Activated CD8-positive, alpha-beta T cell treated with anti-CD3 and anti-CD28 coated beads, Interleukin-2, amount 10 ng/mL, durations not matched to agents 7 days and 5 days (primary cell): ENCODE measurements at regions of chr10 and their contacts with region 1.

Region 1: DNA sequence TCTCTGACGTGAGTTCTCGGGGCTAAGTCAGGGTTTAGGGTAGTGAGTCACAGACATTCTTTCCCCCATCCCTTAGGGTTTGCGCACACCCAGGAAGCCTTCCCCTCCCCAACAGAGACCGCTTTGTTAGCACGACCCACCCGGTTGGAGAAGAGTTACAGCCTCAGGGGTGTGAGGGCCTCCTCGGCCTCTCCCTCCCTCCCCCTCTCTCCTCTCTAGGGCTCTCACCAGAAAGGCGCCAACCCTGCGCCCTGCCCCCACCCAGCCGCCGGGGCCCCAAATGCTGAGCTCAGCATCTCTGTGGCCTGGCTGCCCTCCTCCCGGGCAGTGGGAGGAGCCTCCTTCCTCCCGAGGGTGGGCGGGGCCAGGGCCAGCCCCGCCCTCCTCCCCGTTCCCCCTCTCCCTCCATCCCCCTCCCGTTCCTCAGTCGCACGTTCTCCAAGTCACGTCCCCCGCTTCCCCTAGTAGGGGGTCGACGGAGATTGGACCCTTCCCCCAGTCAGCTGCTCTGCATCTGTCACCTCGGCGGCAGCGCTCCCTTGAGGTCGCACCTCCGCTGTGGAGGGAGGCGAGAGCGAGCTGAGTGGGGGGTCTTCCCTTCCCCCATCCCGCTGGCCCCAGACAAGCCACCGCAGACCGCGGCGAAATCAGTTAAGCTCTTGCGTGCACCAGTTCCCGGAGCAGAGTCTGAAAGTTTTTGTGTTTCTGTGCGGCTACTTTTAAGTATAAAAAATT is 13.0 kb upstream of the DDIT4 start:
- DNase-seq: peak; percentile 97
- ATAC-seq: peak; percentile 74
- H3K4me3 Mint-ChIP-seq: peak overlapping the region; percentile 82
- H3K27ac Mint-ChIP-seq: peak overlapping the region; percentile 98
- H3K4me1 Mint-ChIP-seq: peaks cover 65% of the 10 kb centered on the region
- H3K27me3 Mint-ChIP-seq: no peaks in the 10 kb centered on the region

Region 2: DNA sequence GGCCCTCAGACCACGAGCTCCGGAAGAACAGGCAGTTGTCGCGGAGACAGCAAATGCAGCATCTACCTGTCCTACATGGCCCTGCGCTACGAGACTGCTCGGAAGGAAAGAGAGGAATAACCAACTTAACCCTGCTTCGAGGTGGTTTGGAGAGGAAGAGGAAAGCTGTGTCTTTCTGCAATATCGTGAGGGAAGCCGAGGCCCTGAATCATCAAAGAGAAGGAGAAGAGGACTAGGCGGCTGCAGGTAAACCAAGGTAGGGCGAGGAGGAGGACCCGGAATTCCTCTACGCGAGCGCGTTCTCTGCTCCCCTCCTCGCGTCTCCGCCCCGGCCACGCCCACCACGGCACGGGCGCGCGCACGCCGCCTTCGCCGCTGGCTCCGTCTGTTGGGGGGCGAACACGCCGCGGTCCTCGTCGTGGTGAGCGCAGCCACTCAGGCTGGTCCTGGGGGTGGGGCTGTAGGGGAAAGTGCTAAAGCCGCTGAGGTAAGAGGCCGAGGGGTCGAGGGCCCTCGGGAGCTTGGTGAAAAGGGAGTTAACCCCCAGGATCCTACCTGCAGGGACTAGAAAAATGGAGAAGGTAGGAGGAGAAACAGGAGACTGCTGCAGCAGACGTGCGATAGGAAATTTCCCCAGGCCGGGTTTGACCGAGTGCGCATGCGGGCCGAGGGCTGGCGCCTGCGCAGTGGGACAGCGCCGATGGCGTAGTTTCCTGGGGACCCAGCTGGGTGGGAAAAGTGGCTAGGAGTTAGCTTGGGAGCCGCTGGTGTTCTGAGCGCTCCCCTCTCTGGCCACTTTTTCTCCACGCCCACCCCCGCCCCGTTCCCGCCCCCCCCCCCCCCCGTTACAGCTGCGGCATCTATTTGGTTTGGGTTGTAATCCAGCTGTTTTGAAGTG is 44.9 kb before region 1 on chr10 and contains the starts of genes ANAPC16 and ASCC1:
- CTCF ChIA-PET with region 1: interaction called, 3 read pairs
- POLR2A ChIA-PET with region 1: interaction called, 15 read pairs
- DNase-seq: peak; percentile 95
- ATAC-seq: peak; percentile 88
- H3K4me3 Mint-ChIP-seq: peak within 1 kb of the TSS; percentile 96
- H3K27ac Mint-ChIP-seq: peak within 1 kb of the TSS; percentile 96
- H3K4me1 Mint-ChIP-seq: peaks cover 52% of the 10 kb centered on the region
- H3K27me3 Mint-ChIP-seq: no peaks in the 10 kb centered on the region
- total RNA-seq, gene ANAPC16: 72.9 TPM
- total RNA-seq, gene ASCC1: 34.8 to 40.3 TPM

Region 3: GRCh38 chr10:72223743-72224101 is 37.0 kb before region 1 on chr10:
- CTCF ChIA-PET with region 1: interaction called, 14 read pairs
- POLR2A ChIA-PET with region 1: interaction called, 4 read pairs
- DNase-seq: no peak
- ATAC-seq: peak; percentile 22
- H3K4me3 Mint-ChIP-seq: peak overlapping the region; percentile 24
- H3K27ac Mint-ChIP-seq: peak overlapping the region; percentile 65
- H3K4me1 Mint-ChIP-seq: peaks cover 51% of the 10 kb centered on the region
- H3K27me3 Mint-ChIP-seq: no peaks in the 10 kb centered on the region

Region 4: GRCh38 chr10:72248468-72249151 is 12.1 kb before region 1 on chr10:
- CTCF ChIA-PET with region 1: interaction called, 12 read pairs
- POLR2A ChIA-PET with region 1: interaction called, 60 read pairs
- DNase-seq: peak; percentile 91
- ATAC-seq: peak; percentile 88
- H3K4me3 Mint-ChIP-seq: peak overlapping the region; percentile 80
- H3K27ac Mint-ChIP-seq: peak overlapping the region; percentile 95
- H3K4me1 Mint-ChIP-seq: peaks cover 85% of the 10 kb centered on the region
- H3K27me3 Mint-ChIP-seq: no peaks in the 10 kb centered on the region

Region 5: DNA sequence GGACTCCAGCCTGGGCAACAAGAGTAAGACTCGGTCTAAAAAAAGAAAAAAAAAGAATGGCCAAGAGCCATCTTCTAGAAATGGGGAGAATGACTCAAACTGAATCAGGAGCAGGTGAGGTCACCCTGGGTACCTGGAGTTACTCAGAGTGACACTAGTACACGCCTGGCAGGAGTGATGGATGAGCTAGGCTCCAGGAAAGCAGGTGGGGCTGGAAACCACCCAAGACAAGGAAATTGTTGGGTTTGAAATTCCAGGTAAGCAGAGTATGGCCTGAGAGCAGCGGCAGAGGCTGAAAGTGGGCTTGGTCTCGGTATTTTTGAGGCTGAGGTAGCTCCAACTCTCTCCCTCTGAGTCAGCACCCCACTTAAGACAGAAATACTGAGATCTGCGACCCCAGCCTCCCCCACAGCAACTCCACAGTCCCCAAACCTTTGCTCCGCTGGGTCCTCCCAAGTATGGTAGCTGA is 31.5 kb after region 1 on chr10:
- CTCF ChIA-PET with region 1: interaction called, 12 read pairs
- POLR2A ChIA-PET with region 1: interaction called, 37 read pairs
- DNase-seq: peak; percentile 55
- ATAC-seq: peak; percentile 27
- H3K4me3 Mint-ChIP-seq: peak overlapping the region; percentile 7
- H3K27ac Mint-ChIP-seq: peak overlapping the region; percentile 84
- H3K4me1 Mint-ChIP-seq: peaks cover 64% of the 10 kb centered on the region
- H3K27me3 Mint-ChIP-seq: no peaks in the 10 kb centered on the region

Region 6: GRCh38 chr10:72297968-72298773 is 37.4 kb after region 1 on chr10:
- CTCF ChIA-PET with region 1: interaction called, 12 read pairs
- POLR2A ChIA-PET with region 1: interaction called, 37 read pairs
- DNase-seq: peak; percentile 96
- ATAC-seq: peak; percentile 82
- H3K4me3 Mint-ChIP-seq: peak overlapping the region; percentile 72
- H3K27ac Mint-ChIP-seq: peak overlapping the region; percentile 98
- H3K4me1 Mint-ChIP-seq: peaks cover 65% of the 10 kb centered on the region
- H3K27me3 Mint-ChIP-seq: no peaks in the 10 kb centered on the region

Region 7: DNA sequence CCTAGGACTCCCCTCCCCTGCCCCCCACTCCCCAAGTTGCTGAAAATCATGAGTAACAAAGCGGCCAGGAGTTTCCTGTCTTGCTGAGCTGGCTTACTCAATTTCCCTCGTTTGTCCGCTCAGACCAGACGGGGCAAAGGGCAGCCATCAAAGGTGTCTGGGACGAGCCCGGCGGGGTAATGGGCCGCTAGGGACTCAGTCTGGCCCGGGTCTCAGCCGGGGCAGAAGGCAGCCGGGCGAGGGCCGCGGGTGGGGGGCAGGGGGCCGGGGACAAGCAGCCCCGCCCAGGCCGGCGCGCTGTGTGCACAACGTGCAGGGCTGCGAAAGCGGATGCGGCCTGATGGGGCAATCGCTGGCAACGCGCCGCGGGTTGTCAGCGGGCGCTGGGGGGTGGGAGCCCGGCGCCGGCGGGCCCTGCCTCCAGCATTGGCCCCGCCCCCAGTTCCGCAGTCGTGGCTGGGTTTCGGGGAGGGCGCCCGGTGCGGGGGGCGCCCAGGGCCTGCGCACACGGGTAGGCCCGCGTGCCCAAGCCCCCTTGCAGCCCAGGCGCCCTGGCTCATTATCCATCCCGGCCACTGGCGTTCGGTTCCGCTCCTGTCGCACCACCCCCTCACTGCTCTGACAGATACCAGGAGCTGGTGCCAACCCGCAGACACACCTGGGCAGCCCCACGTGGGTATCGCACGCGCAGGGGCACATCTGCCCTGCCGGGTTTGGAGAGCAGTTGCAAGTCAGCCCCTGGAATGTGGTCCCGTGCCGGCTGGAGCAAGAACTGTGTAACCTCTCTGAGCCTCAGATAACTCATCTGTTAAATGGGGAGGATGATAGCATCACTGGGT is 58.9 kb after region 1 on chr10:
- CTCF ChIA-PET with region 1: interaction called, 17 read pairs
- POLR2A ChIA-PET with region 1: interaction called, 7 read pairs
- DNase-seq: peak; percentile 92
- ATAC-seq: peak; percentile 78
- H3K4me3 Mint-ChIP-seq: peak overlapping the region; percentile 81
- H3K27ac Mint-ChIP-seq: peak overlapping the region; percentile 99
- H3K4me1 Mint-ChIP-seq: peaks cover 88% of the 10 kb centered on the region
- H3K27me3 Mint-ChIP-seq: no peaks in the 10 kb centered on the region